Heart right ventricle (tissue), 16 donors: ENCODE measurements at regions of chr20 and their contacts with region 1.

Region 1: GRCh38 chr20:34100578-34100977 is 11.5 kb downstream of the EIF2S2 start:
- DNase-seq: no peak
- ATAC-seq: no peak
- H3K4me3 ChIP-seq: no peak overlapping the region
- H3K27ac ChIP-seq: no peak overlapping the region
- H3K4me1 ChIP-seq: peaks cover 0 to 13% (median 7%) of the 10 kb centered on the region in 9 donors
- H3K27me3 ChIP-seq: no peaks in the 10 kb centered on the region
- CTCF ChIP-seq: no peak

Region 2: GRCh38 chr20:33971147-33971975 is 129.2 kb before region 1 on chr20:
- intact Hi-C with region 1: no loop called
- DNase-seq: no peak
- ATAC-seq: no peak
- H3K4me3 ChIP-seq: no peak overlapping the region
- H3K27ac ChIP-seq: no peak overlapping the region
- H3K4me1 ChIP-seq: no peaks in the 10 kb centered on the region
- H3K27me3 ChIP-seq: no peaks in the 10 kb centered on the region
- CTCF ChIP-seq: no peak

Region 3: DNA sequence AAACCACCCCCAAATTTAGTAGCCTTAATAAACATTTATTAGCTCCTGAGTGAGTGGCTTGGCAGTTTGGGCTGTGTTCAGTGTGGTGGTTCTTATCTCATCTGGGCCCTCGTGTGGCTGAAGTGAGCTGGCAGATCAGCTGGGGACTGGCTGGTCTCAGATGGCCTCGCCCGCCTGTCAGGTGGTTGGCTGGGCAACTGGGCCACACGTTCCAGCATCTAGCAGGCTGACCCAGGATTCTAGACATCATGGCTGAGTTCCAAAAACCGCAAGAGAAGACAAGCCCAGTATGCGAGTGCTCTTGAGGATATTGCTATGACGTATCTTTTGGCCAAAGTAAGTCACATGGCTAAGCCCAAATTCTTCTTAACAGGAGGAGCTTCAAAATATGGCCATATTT is 17.4 kb before region 1 on chr20:
- intact Hi-C with region 1: loop called in 1 of 10 experiments (anchors 1 kb)
- DNase-seq: peak; percentile 78 to 84
- ATAC-seq: peak; percentile 84 to 96 (median 90)
- H3K4me3 ChIP-seq: no peak overlapping the region
- H3K27ac ChIP-seq: peak overlapping the region in 7 of 10 donors; percentile 13 to 77 (median 57)
- H3K4me1 ChIP-seq: peaks cover 8 to 47% (median 26%) of the 10 kb centered on the region in 9 donors
- H3K27me3 ChIP-seq: no peaks in the 10 kb centered on the region
- CTCF ChIP-seq: peak in 3 of 9 donors; percentile 23 to 31 (median 24)

Region 4: DNA sequence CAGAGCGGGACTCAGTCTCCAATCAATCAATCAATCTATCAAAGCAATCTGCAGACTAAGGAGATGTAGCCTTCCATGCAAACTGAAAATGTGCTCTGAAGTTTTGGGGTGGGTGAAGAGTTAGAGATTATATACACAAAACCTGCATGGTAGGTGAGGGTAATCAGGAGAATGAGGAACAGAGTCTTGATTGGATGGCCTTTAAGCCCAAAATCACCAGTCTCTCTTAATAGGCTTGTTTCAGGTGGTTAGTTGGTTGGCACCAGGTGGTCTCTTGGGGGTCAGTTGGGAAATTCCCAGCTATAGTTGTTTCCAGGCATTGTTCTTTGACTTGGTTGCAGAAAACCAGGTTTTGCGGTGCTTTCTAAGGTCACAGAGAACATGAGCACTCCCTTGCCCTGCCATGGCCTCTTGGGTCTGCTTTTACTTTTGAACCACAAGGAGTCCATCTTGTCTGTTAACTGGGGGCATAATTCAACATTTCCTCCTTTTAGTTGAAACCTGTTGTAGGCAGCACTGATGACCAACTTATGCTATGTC is 44.8 kb after region 1 on chr20:
- intact Hi-C with region 1: loop called in 1 of 10 experiments (anchors 2 kb)
- DNase-seq: no peak
- ATAC-seq: no peak
- H3K4me3 ChIP-seq: no peak overlapping the region
- H3K27ac ChIP-seq: no peak overlapping the region
- H3K4me1 ChIP-seq: no peaks in the 10 kb centered on the region
- H3K27me3 ChIP-seq: no peaks in the 10 kb centered on the region
- CTCF ChIP-seq: no peak